CD8-positive, alpha-beta memory T cell (primary cell): ENCODE measurements at regions of chr5 and their contacts with region 1.

Region 1: DNA sequence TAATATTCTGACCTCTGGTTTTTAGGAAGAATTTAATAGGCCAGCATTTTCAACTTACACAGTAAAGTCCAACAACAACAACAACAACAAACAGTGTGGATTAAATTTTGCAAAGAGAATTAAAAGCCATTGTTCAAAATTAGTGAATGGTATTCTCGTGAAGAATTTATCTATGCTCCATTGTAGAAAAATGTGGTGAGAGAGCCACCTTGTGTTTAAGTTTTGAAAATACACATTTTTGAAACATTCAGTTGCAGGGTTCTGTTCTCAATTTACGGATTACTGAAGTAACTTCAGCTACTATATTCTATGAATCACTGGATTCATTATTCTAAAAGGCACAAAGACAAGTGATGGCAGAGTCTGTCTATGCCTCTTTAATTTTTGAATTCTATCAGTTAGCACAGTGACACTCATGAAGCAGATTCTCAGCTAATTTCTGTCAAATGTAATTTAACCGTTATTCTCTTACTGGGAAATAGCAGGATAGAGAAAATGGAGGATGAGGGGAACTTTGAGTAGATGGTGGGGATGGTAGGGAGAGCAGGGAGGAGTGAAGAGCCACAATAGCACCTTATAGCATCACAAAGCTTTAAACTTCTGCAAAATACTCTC is 11.0 kb downstream of the CCDC152 start:
- DNase-seq: no peak
- H3K4me3 ChIP-seq: no peak overlapping the region
- H3K4me3 Mint-ChIP-seq: no peak overlapping the region
- H3K27ac ChIP-seq: no peak overlapping the region
- H3K27ac Mint-ChIP-seq: peak overlapping the region in 1 of 8 donors; percentile 4
- H3K4me1 ChIP-seq: no peaks in the 10 kb centered on the region
- H3K4me1 Mint-ChIP-seq: no peaks in the 10 kb centered on the region
- H3K27me3 ChIP-seq: no peaks in the 10 kb centered on the region
- H3K27me3 Mint-ChIP-seq: peaks cover 13 to 16% of the 10 kb centered on the region in 2 donors

Region 2: GRCh38 chr5:42514754-42515153 is 252.8 kb before region 1 on chr5:
- CTCF ChIA-PET with region 1: interaction called, 11 read pairs
- POLR2A ChIA-PET with region 1: no interaction called
- DNase-seq: no peak
- H3K4me3 ChIP-seq: no peak overlapping the region
- H3K4me3 Mint-ChIP-seq: no peak overlapping the region
- H3K27ac ChIP-seq: no peak overlapping the region
- H3K27ac Mint-ChIP-seq: no peak overlapping the region
- H3K4me1 ChIP-seq: no peaks in the 10 kb centered on the region
- H3K4me1 Mint-ChIP-seq: no peaks in the 10 kb centered on the region
- H3K27me3 ChIP-seq: no peaks in the 10 kb centered on the region
- H3K27me3 Mint-ChIP-seq: peaks cover 3 to 5% of the 10 kb centered on the region in 2 donors

Region 3: GRCh38 chr5:42583322-42583721 is 184.3 kb before region 1 on chr5:
- CTCF ChIA-PET with region 1: interaction called, 10 read pairs
- POLR2A ChIA-PET with region 1: no interaction called
- DNase-seq: peak in 3 of 5 donors; percentile 7 to 45 (median 7)
- H3K4me3 ChIP-seq: no peak overlapping the region
- H3K4me3 Mint-ChIP-seq: no peak overlapping the region
- H3K27ac ChIP-seq: no peak overlapping the region
- H3K27ac Mint-ChIP-seq: no peak overlapping the region
- H3K4me1 ChIP-seq: no peaks in the 10 kb centered on the region
- H3K4me1 Mint-ChIP-seq: peaks cover 0 to 5% (median 2%) of the 10 kb centered on the region in 3 donors
- H3K27me3 ChIP-seq: no peaks in the 10 kb centered on the region
- H3K27me3 Mint-ChIP-seq: peaks cover 3 to 29% of the 10 kb centered on the region in 2 donors

Region 4: DNA sequence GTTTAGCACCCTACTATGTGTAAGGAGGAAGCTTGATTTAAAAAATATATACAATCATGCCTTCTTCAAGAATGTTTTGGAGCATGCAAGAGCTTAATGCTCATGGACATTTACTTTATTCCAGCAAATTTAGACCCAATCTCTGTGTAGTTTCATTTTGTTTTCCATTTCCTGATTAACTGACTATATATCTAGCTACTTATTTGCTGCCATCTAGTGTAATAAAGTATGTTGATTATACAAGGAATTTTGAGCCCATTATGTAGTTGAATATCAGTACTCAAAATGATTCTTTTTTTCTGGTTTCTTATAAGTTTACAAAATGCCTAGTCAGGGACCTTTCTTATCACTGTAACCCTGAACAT is 111.0 kb before region 1 on chr5:
- CTCF ChIA-PET with region 1: no interaction called
- POLR2A ChIA-PET with region 1: no interaction called
- DNase-seq: no peak
- H3K4me3 ChIP-seq: no peak overlapping the region
- H3K4me3 Mint-ChIP-seq: peak overlapping the region in 3 of 7 donors; percentile 19 to 32 (median 27)
- H3K27ac ChIP-seq: no peak overlapping the region
- H3K27ac Mint-ChIP-seq: no peak overlapping the region
- H3K4me1 ChIP-seq: no peaks in the 10 kb centered on the region
- H3K4me1 Mint-ChIP-seq: peaks cover 4 to 6% (median 6%) of the 10 kb centered on the region in 3 donors
- H3K27me3 ChIP-seq: no peaks in the 10 kb centered on the region
- H3K27me3 Mint-ChIP-seq: peaks cover 19 to 25% of the 10 kb centered on the region in 2 donors

Region 5: GRCh38 chr5:42745426-42745825 is 22.2 kb before region 1 on chr5:
- CTCF ChIA-PET with region 1: no interaction called
- POLR2A ChIA-PET with region 1: no interaction called
- DNase-seq: no peak
- H3K4me3 ChIP-seq: no peak overlapping the region
- H3K4me3 Mint-ChIP-seq: no peak overlapping the region
- H3K27ac ChIP-seq: no peak overlapping the region
- H3K27ac Mint-ChIP-seq: no peak overlapping the region
- H3K4me1 ChIP-seq: no peaks in the 10 kb centered on the region
- H3K4me1 Mint-ChIP-seq: peaks cover 8 to 26% (median 9%) of the 10 kb centered on the region in 3 donors
- H3K27me3 ChIP-seq: no peaks in the 10 kb centered on the region
- H3K27me3 Mint-ChIP-seq: no peaks in the 10 kb centered on the region

Region 6: DNA sequence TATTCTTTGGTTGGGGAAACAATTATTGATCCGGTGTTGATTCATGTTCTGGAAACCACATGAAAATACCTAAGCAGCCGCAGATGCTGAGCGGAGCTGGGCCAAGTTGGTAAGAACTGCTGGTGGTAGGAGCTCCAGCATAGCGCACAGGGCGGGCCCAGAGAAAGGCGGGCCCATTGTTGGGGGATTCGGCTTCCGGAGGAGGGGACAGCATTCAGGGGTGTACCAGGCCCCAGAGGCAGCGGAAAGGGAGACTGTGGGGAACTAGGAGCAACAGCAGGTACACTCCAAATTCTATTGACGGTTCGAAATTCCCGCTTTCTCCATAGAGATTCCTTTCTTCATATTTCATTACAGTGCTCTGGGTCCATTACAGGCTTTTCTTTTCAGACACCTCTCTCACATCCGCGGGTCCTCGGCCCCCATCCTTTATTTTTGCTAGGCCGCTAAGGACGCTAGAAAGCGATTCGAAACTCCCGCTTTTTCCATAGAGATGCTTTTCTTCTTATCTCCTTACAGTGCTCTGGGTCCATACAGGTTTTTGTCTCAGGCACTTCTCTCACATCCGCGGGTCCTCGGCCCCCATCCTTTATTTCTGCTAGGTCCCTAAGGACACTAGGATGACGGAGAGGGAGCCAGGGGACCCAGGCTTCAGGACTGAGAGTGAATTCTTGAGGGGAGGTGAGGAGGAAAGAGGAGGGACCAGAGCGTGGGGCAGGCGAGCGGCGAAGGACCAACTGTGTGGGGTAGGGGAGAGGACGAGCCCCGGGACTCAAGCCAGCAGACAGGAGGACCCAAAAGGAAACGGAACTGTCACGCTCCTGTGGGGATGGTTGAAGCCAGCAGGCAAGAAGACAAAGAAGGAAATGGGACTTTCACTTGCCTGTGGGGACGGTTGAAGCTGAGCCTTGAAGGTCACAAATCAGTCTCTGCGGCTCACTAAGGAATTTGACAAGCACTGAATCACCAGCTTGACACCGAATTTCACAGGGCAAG is 10.7 kb before region 1 on chr5 and contains the start of gene CCDC152:
- CTCF ChIA-PET with region 1: no interaction called
- POLR2A ChIA-PET with region 1: no interaction called
- DNase-seq: peak; percentile 24 to 70 (median 36)
- H3K4me3 ChIP-seq: peak within 1 kb of the TSS; percentile 51
- H3K4me3 Mint-ChIP-seq: peak within 1 kb of the TSS; percentile 81 to 89 (median 85)
- H3K27ac ChIP-seq: no peak within 1 kb of the TSS
- H3K27ac Mint-ChIP-seq: peak within 1 kb of the TSS in 7 of 8 donors; percentile 3 to 95 (median 64)
- H3K4me1 ChIP-seq: no peaks in the 10 kb centered on the region
- H3K4me1 Mint-ChIP-seq: peaks cover 9 to 17% (median 9%) of the 10 kb centered on the region in 3 donors
- H3K27me3 ChIP-seq: no peaks in the 10 kb centered on the region
- H3K27me3 Mint-ChIP-seq: peaks cover 4 to 15% of the 10 kb centered on the region in 2 donors
- total RNA-seq, gene CCDC152: 14.5 to 16.2 TPM